GM18951 (cell line): ENCODE measurements at regions of chr13 and their contacts with region 1.

Region 1: DNA sequence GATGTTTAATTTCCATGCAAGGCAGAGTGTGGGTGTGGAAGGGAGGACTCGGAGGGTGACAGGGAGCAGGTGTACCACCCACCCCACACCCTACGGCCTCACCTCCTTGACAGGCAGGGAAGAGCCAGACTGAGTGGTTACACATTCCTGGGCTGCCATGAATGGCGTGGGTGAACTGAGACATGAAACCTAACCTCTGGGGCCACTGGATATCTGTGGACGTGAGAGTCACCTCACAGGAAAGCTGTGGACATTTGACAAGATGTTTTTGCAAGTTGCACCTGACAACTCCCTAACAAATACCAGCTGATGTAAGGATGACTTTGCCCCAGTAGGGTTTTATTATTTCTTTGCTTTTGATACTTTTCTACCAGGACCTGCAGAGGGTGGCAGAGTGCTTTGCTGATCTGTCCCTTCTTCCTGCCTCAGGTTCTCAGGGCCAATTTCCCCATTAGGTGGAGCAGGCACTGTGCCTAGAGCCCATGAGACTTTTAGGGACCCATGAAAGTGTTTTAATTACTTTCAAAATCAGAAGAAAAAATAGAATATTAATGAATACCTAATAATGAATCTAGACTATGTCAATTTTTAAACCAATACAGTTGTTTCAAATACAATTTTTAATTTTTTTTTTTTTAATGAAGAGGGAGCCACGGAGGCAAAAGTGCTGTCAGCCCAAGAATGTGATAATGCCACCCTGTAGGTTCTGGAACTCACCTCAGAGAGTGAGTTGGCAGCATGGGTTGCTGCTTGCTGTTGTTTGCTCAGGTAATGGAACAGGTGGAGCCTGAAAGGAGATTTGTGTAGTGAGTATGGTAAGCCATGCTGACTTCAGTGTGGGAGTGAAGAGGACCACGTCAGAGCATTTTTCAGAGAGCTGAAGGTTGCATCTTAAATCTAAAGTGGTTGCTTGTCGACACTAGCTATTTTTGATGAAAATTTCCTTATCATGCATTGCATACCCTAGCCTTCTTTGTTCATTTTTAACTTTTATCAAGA is 58.0 kb upstream of the CYSLTR2 start:
- POLR2A ChIP-seq: no peak

Region 2: DNA sequence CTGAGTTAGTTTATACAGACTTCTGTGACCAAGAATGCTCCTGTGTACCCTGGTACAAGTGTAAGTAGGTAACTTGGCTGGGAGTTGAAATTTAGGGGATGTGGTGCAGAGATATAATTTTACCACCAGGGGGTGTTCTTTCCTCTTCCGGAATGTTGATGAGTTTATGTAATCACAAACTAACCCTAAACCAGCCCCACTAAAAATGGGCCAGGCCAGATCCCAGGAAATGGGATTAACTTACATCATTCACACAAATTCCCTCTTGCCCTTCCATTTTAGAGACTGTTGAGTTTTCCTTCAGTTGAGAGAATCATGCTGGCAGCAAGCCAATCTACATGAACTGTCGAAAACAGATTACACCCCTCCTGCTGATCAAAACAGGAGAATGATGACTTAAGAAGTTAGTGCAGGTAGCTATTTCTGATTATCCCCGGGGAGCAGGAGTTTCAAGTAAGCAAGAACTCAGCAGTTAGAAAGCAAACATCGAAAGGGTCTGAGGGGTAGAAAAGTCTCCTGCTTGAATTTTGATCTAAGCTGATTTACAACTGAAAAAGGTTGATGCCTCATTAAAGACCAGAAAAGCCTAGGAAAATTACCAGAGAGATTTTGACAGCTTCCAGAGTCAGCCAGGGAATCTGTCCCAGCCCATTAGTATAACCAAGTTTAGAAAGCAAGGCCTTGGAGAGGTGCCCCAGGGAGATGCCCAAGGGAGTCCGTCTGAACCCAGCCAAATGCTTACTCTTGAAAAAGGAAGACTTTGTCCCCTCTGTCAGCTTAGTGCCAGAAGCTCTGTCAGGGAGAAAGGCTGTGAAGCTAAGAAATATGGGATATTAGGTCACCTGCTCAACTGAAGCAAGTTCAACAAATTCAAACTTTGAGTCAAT is 468.5 kb before region 1 on chr13:
- in situ Hi-C with region 1: loop called (anchors 25 kb)
- POLR2A ChIP-seq: no peak

Region 3: DNA sequence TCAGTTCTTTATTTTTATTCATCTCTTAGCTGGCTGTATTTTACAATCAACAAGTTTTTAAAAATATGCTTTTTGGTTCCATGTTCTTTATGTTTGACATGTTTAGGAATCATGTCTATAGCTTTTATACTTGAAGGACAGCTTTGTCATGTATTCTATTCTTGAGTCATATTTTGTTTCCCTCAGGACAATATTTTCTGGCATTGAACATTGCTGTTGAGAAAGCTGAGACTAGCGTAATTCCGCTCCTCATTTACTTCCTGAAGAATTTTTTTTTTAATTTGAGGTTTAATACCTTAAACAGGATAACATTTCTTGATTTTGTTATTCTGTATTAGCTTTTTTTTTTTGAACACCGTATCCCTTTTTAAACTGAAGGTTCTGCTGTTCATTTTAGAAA is 239.0 kb before region 1 on chr13:
- in situ Hi-C with region 1: no loop called
- POLR2A ChIP-seq: no peak

Region 4: GRCh38 chr13:48761256-48761655 is 165.5 kb after region 1 on chr13:
- in situ Hi-C with region 1: loop called (anchors 5 kb)
- POLR2A ChIP-seq: no peak